Right ventricle myocardium superior (tissue), 1 donor: ENCODE measurements at regions of chr19 and their contacts with region 1.

Region 1: DNA sequence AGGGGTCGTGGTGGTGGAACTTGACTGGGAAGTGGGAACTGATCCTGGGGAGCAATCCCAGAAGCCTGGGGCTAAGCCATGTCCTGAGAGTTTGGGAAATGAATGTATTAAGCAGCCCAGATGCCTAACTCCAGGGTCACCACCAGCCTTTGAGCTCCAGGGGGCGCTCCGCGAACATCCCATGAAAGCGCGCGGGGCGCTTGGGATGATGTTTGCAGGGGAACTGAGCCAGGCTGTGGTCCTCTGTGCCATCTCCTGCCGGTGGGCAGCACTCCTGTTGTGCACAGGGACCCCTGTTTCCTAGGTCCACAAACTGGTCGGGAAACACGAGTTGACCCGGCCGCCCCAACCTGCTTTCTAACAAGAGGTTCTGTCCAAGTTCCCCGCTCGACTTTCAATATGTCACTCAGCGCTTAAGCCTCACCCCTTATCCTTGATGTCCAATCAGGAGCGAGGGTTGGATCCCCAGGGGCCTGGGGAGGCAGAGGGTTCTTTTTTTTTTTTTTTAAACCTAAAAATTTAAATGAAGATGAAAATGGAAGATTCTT is 14.4 kb downstream of the LEUTX start:
- DNase-seq: peak; percentile 87
- ATAC-seq: peak; percentile 99

Region 2: DNA sequence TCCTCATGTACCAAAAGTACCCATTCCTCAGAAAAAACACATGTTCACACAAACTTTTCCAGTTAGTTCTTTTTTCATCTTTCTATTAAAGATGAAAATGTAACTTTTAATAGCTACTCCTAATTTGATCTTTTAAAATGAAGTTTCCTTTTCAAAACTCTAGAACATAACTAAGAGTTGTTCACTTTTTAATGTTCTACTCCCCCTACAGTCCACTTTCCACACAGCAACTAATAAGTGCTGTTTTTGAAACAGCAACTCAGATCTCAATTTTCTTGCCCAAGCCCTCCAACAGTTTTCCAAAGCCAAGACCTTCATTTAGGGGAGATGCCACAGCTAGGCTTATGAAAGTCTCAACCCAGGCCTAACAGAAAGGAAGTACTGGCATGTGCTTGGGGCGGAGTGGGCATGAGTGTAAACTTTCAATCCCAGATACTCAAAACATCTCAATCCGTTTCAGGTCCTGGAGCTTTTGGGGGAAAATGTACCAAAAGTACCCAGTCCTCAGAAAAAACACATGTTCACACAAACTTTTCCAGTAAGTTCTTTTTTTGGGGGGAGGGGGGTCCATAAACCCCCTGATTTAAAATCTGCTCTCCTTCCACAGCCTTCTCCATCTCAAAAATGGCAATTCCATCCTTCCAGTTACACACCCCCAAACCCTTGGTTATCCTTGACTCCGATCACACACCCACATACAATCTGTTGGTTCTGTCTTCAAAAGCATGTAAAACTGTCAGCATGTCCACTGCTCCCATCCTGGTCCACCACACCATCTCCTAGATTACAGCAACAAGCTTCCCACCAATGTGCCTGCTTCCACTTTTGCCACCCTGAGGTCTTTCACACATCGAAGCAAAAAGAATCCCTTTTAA is 51.1 kb after region 1 on chr19:
- intact Hi-C with region 1: loop called (anchors 5 kb)
- DNase-seq: no peak
- ATAC-seq: no peak

Region 3: DNA sequence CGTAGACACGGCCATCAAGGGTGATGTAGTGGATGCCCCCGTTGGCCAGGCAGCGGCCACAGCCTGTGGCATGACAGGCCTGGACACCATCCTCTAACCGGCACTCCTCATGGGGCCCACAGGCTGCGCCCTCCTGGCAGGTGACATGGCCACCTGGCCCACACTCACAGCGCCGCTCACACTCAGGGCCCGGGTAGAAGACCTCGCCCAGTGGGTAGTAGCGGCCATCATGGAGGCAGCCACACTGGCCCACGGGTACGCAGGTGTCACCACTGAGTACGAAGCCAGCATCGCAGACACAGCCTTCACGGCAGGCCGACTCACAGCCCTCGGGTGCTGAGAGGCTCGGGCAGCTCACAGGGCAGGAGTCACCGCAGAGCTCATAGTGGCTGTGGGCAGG is 80.3 kb after region 1 on chr19:
- intact Hi-C with region 1: no loop called
- DNase-seq: no peak
- ATAC-seq: no peak

Region 4: DNA sequence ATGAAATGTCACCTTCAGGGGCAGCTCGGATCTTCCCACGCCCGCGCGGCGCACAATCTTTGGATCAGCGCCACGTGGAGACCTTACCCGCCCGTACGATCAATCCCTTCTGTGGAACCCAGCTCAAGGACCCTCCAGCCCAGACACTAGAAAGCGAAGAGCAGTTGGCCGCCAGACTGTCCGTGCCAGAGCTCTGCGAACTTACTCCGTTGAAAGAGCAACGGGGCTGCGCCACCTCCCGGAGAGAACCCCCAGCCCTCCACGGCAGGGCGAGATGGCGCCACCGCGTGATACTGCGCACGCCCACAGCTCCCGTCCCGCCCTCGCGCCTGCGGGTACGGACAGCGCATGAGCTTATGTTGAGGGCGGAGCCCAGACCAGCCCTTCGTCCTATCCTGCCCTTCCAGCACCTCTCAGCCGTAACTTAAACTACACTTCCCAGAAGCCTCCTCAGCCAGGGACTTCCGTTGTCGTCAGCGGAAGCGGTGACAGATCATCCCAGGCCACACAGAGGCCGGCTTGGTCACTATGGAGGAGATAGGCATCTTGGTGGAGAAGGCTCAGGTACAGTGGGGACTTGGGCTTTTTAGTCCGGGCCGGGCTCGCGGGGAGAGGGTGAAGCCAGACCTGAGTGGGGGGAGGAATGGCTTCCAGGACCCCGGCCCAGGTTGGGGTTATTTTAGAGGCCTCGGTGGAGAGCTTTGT is 177.8 kb after region 1 on chr19 and contains the start of gene PSMC4:
- intact Hi-C with region 1: loop called (anchors 10 kb)
- DNase-seq: peak; percentile 99
- ATAC-seq: peak; percentile 99
- total RNA-seq, gene PSMC4: 64.8 TPM

Region 5: GRCh38 chr19:40217027-40217810 is 424.1 kb after region 1 on chr19:
- intact Hi-C with region 1: no loop called
- DNase-seq: no peak
- ATAC-seq: no peak